Naive thymus-derived CD4-positive, alpha-beta T cell (primary cell): ENCODE measurements at regions of chr7 and their contacts with region 1.

Region 1: DNA sequence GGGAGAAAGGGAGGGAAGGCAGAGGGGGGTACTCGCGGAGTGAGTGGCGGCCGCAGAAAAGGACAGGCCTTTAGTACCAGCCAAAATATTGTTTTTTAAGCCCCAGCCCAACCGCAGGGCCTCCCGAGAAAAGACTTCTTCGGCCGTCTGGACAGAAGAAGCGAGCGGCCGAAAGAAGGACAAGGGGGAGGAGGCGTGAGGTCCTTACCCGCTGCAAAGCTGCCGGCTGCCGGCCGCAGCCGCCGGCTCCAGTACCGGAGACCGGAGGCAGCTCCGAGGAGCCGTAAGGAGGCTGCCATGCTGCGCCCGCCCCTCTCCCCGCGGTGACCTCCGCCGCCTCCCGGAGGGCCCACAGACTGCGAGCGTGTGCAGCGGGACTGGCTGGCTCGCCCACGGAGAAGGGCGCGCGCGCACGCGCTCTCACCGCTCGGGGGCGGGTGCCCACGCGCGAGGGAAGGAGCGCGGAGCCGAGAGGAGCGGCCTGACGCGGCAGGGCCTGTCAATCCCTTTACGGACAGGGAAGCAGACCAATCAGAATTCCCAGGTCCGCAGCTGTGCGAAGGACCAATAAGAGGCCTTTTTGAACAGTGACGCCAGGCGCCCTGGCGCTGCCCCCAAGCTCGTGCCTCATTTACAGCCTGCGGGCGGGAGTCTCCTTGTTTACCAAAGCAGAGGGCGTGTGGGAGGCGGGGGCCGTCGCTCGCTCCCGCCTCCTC is at the start of gene HIBADH:
- DNase-seq: peak; percentile 94 to 99 (median 97)
- ATAC-seq: peak; percentile 97
- H3K4me3 ChIP-seq: peak within 1 kb of the TSS; percentile 97
- H3K4me3 Mint-ChIP-seq: peak within 1 kb of the TSS; percentile 81 to 92 (median 86)
- H3K27ac ChIP-seq: peak within 1 kb of the TSS; percentile 89
- H3K27ac Mint-ChIP-seq: peak within 1 kb of the TSS; percentile 84 to 97 (median 93)
- H3K4me1 ChIP-seq: peaks cover 6% of the 10 kb centered on the region in 2 donors
- H3K4me1 Mint-ChIP-seq: peaks cover 0 to 40% (median 25%) of the 10 kb centered on the region in 7 donors
- H3K27me3 ChIP-seq: no peaks in the 10 kb centered on the region
- H3K27me3 Mint-ChIP-seq: peaks cover 0 to 2% (median 0%) of the 10 kb centered on the region in 5 donors
- total RNA-seq, gene HIBADH: 8.0 to 16.5 (median 14.3) TPM

Region 2: DNA sequence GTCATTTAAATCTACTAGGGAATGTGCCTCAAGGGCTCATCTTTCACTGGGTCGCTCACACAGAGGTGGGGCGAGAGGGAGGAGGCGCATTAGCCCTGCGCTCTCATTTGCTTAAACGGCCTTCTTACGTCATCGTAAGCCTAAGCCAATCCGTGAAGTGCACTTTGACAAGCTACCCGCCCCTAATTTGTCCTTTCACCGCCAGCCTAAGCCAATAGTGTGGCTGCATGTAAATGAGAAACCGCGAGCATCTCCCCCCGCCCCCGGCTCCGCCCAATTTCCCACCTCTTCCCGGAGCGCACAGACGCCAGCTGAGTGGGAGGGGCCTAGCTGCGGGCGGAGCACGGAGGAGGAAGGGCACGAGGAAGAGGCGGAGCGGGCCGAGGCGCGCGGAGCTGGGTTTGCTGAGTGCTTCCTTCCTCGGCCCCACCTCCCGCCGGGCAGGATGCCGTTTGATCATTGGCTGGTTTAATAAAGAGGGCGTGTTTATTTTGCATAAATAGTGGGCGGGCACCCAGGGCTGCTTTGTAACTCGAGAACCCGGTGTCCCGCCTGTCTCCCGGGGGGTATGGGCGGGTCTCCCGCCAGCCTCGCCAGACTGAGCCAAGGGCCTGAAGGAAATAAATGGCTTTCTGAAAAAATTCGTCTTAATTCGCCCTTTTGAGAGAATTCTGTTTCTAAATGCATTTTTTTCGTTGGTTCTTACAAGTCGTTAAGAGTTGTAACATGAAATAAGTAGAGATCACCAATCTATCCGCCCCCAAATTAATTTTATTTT is 1800.2 kb before region 1 on chr7:
- CTCF ChIA-PET with region 1: no interaction called
- POLR2A ChIA-PET with region 1: no interaction called
- intact Hi-C with region 1: loop called in 1 of 2 experiments (anchors 2 kb)
- DNase-seq: peak; percentile 32 to 95 (median 49)
- ATAC-seq: peak; percentile 93
- H3K4me3 ChIP-seq: peak overlapping the region; percentile 4
- H3K4me3 Mint-ChIP-seq: peak overlapping the region in 8 of 10 donors; percentile 38 to 87 (median 61)
- H3K27ac ChIP-seq: no peak overlapping the region
- H3K27ac Mint-ChIP-seq: peak overlapping the region in 8 of 9 donors; percentile 14 to 88 (median 84)
- H3K4me1 ChIP-seq: peaks cover 0 to 6% of the 10 kb centered on the region in 2 donors
- H3K4me1 Mint-ChIP-seq: peaks cover 8 to 46% (median 20%) of the 10 kb centered on the region in 7 donors
- H3K27me3 ChIP-seq: peaks cover 35 to 87% of the 10 kb centered on the region in 2 donors
- H3K27me3 Mint-ChIP-seq: peaks cover 23 to 82% (median 62%) of the 10 kb centered on the region in 5 donors

Region 3: GRCh38 chr7:26864309-26865093 is 798.1 kb before region 1 on chr7 and contains the start of gene SKAP2:
- CTCF ChIA-PET with region 1: no interaction called
- POLR2A ChIA-PET with region 1: no interaction called
- intact Hi-C with region 1: loop called in 1 of 2 experiments (anchors 10 kb)
- DNase-seq: peak; percentile 41 to 89 (median 63)
- ATAC-seq: peak; percentile 93
- H3K4me3 ChIP-seq: peak within 1 kb of the TSS; percentile 88
- H3K4me3 Mint-ChIP-seq: peak within 1 kb of the TSS; percentile 72 to 92 (median 88)
- H3K27ac ChIP-seq: peak within 1 kb of the TSS; percentile 23
- H3K27ac Mint-ChIP-seq: peak within 1 kb of the TSS; percentile 36 to 89 (median 74)
- H3K4me1 ChIP-seq: peaks cover 0 to 4% of the 10 kb centered on the region in 2 donors
- H3K4me1 Mint-ChIP-seq: peaks cover 5 to 24% (median 19%) of the 10 kb centered on the region in 7 donors
- H3K27me3 ChIP-seq: peaks cover 0 to 9% of the 10 kb centered on the region in 2 donors
- H3K27me3 Mint-ChIP-seq: peaks cover 46 to 68% (median 49%) of the 10 kb centered on the region in 5 donors
- total RNA-seq, gene SKAP2: 2.7 to 31.4 (median 5.1) TPM

Region 4: GRCh38 chr7:27784393-27785053 is 121.9 kb after region 1 on chr7:
- CTCF ChIA-PET with region 1: interaction called, 4 read pairs
- POLR2A ChIA-PET with region 1: no interaction called
- intact Hi-C with region 1: loop called in 1 of 2 experiments (anchors 1 kb)
- DNase-seq: peak in 7 of 9 donors; percentile 30 to 54 (median 43)
- ATAC-seq: peak; percentile 73
- H3K4me3 ChIP-seq: no peak overlapping the region
- H3K4me3 Mint-ChIP-seq: no peak overlapping the region
- H3K27ac ChIP-seq: no peak overlapping the region
- H3K27ac Mint-ChIP-seq: peak overlapping the region in 1 of 9 donors; percentile 15
- H3K4me1 ChIP-seq: no peaks in the 10 kb centered on the region
- H3K4me1 Mint-ChIP-seq: peaks cover 4 to 35% (median 20%) of the 10 kb centered on the region in 7 donors
- H3K27me3 ChIP-seq: no peaks in the 10 kb centered on the region
- H3K27me3 Mint-ChIP-seq: no peaks in the 10 kb centered on the region

Region 5: GRCh38 chr7:27972276-27972675 is 309.6 kb after region 1 on chr7:
- CTCF ChIA-PET with region 1: no interaction called
- POLR2A ChIA-PET with region 1: no interaction called
- intact Hi-C with region 1: loop called in 1 of 2 experiments (anchors 5 kb)
- DNase-seq: peak in 6 of 9 donors; percentile 23 to 54 (median 44)
- ATAC-seq: peak; percentile 72
- H3K4me3 ChIP-seq: peak overlapping the region; percentile 44
- H3K4me3 Mint-ChIP-seq: peak overlapping the region; percentile 72 to 89 (median 82)
- H3K27ac ChIP-seq: peak overlapping the region; percentile 2
- H3K27ac Mint-ChIP-seq: peak overlapping the region; percentile 44 to 92 (median 88)
- H3K4me1 ChIP-seq: peaks cover 0 to 16% of the 10 kb centered on the region in 2 donors
- H3K4me1 Mint-ChIP-seq: peaks cover 24 to 39% (median 35%) of the 10 kb centered on the region in 7 donors
- H3K27me3 ChIP-seq: no peaks in the 10 kb centered on the region
- H3K27me3 Mint-ChIP-seq: peaks cover 0 to 4% (median 0%) of the 10 kb centered on the region in 5 donors

Region 6: DNA sequence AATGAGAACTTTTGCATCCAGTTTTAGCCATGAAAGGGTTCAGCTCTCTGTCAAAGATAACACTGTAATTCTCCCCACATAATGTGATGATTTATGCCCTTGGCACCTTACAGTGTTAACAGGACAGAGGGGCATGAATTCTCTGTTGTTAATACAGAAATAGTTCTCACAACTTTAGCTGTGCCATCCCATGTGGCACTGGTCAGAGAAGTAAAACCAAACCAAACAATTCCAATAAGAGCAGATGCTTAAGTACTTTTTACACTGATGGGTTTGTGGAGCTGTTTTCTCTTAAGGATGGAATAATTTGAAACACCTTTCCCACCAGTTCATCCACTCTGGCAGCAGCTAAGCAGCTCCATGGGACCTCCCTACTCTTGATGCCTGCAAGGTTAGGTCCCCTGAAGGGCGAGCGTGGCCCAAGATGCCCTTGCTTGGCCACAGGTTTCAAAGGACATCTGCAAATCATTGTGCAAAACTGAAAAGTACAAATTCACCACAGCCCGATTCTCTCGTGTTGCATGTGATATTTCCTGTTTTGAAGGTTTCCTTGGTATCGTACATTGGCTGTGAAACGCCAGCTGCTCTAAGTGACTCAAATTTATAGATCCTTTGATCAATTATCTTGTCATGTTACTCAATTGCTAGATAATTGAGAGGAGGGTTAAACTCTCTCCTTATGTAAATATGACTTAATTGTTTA is 667.2 kb after region 1 on chr7:
- CTCF ChIA-PET with region 1: no interaction called
- POLR2A ChIA-PET with region 1: no interaction called
- intact Hi-C with region 1: loop called in 1 of 2 experiments (anchors 10 kb)
- DNase-seq: peak in 7 of 9 donors; percentile 22 to 56 (median 42)
- ATAC-seq: peak; percentile 69
- H3K4me3 ChIP-seq: peak overlapping the region; percentile 15
- H3K4me3 Mint-ChIP-seq: peak overlapping the region; percentile 39 to 90 (median 82)
- H3K27ac ChIP-seq: peak overlapping the region; percentile 55
- H3K27ac Mint-ChIP-seq: peak overlapping the region; percentile 67 to 96 (median 91)
- H3K4me1 ChIP-seq: peaks cover 0 to 36% of the 10 kb centered on the region in 2 donors
- H3K4me1 Mint-ChIP-seq: peaks cover 18 to 47% (median 43%) of the 10 kb centered on the region in 7 donors
- H3K27me3 ChIP-seq: no peaks in the 10 kb centered on the region
- H3K27me3 Mint-ChIP-seq: peaks cover 0 to 4% (median 0%) of the 10 kb centered on the region in 5 donors

Region 7: GRCh38 chr7:28533731-28534531 is 871.3 kb after region 1 on chr7:
- CTCF ChIA-PET with region 1: no interaction called
- POLR2A ChIA-PET with region 1: no interaction called
- intact Hi-C with region 1: no loop called
- DNase-seq: no peak
- ATAC-seq: no peak
- H3K4me3 ChIP-seq: no peak overlapping the region
- H3K4me3 Mint-ChIP-seq: no peak overlapping the region
- H3K27ac ChIP-seq: no peak overlapping the region
- H3K27ac Mint-ChIP-seq: no peak overlapping the region
- H3K4me1 ChIP-seq: no peaks in the 10 kb centered on the region
- H3K4me1 Mint-ChIP-seq: no peaks in the 10 kb centered on the region
- H3K27me3 ChIP-seq: no peaks in the 10 kb centered on the region
- H3K27me3 Mint-ChIP-seq: peaks cover 8 to 35% (median 16%) of the 10 kb centered on the region in 5 donors